CD4-positive, alpha-beta T cell (primary cell): ENCODE measurements at regions of chr11 and their contacts with region 1.

Region 1: GRCh38 chr11:35237860-35238715 is 99.1 kb downstream of the CD44 start:
- DNase-seq: peak in 8 of 14 experiments; percentile 23 to 83 (median 50)
- ATAC-seq: no peak
- H3K4me3 ChIP-seq: no peak overlapping the region
- H3K4me3 Mint-ChIP-seq: peak overlapping the region; percentile 39
- H3K27ac ChIP-seq: no peak overlapping the region
- H3K27ac Mint-ChIP-seq: peak overlapping the region; percentile 77
- H3K4me1 ChIP-seq: peaks cover 47% of the 10 kb centered on the region
- H3K4me1 Mint-ChIP-seq: peaks cover 85% of the 10 kb centered on the region
- H3K27me3 ChIP-seq: no peaks in the 10 kb centered on the region
- H3K27me3 Mint-ChIP-seq: no peaks in the 10 kb centered on the region
- CTCF ChIP-seq: peak; percentile 74

Region 2: GRCh38 chr11:35334385-35335090 is 96.5 kb after region 1 on chr11:
- CTCF ChIA-PET with region 1: no interaction called
- POLR2A ChIA-PET with region 1: interaction called, 4 read pairs
- intact Hi-C with region 1: loop called in 1 of 2 experiments (anchors 5 kb)
- DNase-seq: peak in 4 of 14 experiments; percentile 31 to 55 (median 48)
- ATAC-seq: no peak
- H3K4me3 ChIP-seq: no peak overlapping the region
- H3K4me3 Mint-ChIP-seq: no peak overlapping the region
- H3K27ac ChIP-seq: no peak overlapping the region
- H3K27ac Mint-ChIP-seq: peak overlapping the region; percentile 59
- H3K4me1 ChIP-seq: peaks cover 39% of the 10 kb centered on the region
- H3K4me1 Mint-ChIP-seq: peaks cover 43% of the 10 kb centered on the region
- H3K27me3 ChIP-seq: no peaks in the 10 kb centered on the region
- H3K27me3 Mint-ChIP-seq: no peaks in the 10 kb centered on the region
- CTCF ChIP-seq: no peak